Endothelial cell of umbilical vein (primary cell): ENCODE measurements at regions of chr1 and their contacts with region 1.

Region 1: GRCh38 chr1:150876119-150876454 is 312 bp downstream of the ARNT start:
- DNase-seq: peak; percentile 73
- H3K4me3 ChIP-seq: peak overlapping the region; percentile 81 to 92 (median 91)
- H3K27ac ChIP-seq: peak overlapping the region; percentile 74
- H3K4me1 ChIP-seq: peaks cover 13% of the 10 kb centered on the region
- H3K27me3 ChIP-seq: no peaks in the 10 kb centered on the region
- CTCF ChIP-seq: no peak
- POLR2A ChIP-seq: no peak

Region 2: DNA sequence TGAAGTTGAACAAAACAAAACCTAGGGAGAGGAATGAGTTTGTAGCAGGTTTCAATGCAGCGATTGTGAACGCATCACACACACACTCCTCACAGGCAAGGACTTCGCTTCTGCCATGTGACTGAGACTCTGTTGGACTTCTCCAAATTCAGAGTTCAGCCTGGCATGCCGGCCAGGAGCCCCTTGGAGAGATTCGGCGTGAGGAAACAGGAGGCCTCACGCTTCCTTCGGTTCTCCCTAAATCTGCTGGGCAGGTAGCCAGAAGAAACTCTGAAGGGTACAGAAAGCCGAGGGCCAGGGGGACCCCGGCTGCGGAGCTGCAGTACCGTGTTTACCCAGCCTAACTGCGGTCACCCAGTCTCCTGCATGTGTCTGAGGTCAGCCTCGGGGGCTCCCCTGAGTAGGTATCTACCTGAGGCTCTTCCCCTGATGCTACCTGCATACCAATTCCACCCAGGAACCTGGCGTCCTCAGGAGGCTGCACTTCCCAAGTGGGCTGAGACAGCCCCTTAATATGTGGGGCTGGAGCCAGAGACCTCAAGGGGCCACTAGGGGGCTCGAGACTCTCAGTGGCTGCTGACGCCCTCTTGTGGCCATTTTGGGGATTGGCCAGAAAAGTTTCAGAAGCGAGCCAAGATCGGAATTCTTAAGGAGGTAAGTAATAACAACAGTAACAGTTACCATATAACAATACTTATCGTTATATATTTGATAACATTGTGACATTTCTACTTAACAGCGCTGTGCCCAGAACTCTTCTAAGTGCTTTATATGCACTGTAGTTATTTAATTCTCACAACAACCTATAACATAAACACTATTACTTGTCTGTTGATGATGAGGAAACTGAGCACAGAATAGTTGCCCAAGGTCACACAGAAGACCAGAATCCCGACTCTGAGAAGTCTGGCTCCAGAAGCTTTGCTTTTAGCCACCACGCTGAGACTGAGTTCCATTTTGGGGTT is 103.3 kb after region 1 on chr1:
- CTCF ChIA-PET with region 1: no interaction called
- POLR2A ChIA-PET with region 1: no interaction called
- dilution Hi-C with region 1: no loop called
- intact Hi-C with region 1: loop called (anchors 5 kb)
- DNase-seq: peak; percentile 91
- H3K4me3 ChIP-seq: no peak overlapping the region
- H3K27ac ChIP-seq: no peak overlapping the region
- H3K4me1 ChIP-seq: peaks cover 22% of the 10 kb centered on the region
- H3K27me3 ChIP-seq: no peaks in the 10 kb centered on the region
- CTCF ChIP-seq: peak; percentile 100
- POLR2A ChIP-seq: no peak